B cell (primary cell): ENCODE measurements at regions of chr16 and their contacts with region 1.

Region 1: DNA sequence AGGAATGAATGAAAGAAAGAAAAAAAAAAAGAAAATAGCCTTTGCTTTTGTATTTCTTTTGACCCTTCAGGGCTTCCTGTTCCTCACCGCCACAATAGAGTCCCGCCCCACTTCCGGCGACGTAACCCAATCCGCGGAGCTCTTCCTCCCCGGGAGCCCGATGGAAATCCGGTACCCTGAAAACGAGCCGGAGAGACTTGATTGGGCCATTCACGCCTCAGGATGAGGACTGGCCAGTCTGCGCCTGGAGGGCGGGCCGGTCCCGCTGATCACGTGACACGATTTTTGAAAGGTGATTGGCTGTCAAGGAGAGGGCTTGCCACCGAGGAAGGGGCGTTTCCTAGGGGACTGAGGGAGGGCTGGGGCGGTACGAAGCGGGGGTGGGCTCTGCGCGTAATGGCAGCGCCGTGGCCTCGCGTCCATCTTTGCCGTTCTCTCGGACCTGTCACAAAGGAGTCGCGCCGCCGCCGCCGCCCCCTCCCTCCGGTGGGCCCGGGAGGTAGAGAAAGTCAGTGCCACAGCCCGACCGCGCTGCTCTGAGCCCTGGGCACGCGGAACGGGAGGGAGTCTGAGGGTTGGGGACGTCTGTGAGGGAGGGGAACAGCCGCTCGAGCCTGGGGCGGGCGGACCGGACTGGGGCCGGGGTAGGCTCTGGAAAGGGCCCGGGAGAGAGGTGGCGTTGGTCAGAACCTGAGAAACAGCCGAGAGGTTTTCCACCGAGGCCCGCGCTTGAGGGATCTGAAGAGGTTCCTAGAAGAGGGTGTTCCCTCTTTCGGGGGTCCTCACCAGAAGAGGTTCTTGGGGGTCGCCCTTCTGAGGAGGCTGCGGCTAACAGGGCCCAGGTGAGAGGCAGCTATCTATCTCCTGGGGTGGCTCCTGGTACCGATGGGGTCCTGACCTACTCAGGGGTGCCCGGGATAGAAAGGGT is at the starts of genes PSME3IP1 and RSPRY1:
- DNase-seq: peak; percentile 100
- ATAC-seq: peak; percentile 91
- H3K4me3 ChIP-seq: peak within 1 kb of the TSS; percentile 86 to 99 (median 89)
- H3K4me3 Mint-ChIP-seq: peak within 1 kb of the TSS; percentile 90
- H3K27ac ChIP-seq: peak within 1 kb of the TSS; percentile 87 to 92
- H3K27ac Mint-ChIP-seq: peak within 1 kb of the TSS; percentile 98
- H3K4me1 ChIP-seq: peaks cover 26 to 28% of the 10 kb centered on the region in 2 donors
- H3K4me1 Mint-ChIP-seq: peaks cover 61% of the 10 kb centered on the region
- H3K27me3 ChIP-seq: no peaks in the 10 kb centered on the region
- H3K27me3 Mint-ChIP-seq: no peaks in the 10 kb centered on the region
- CTCF ChIP-seq: no peak
- total RNA-seq, gene PSME3IP1: 156 and 166 TPM in 2 replicates
- total RNA-seq, gene RSPRY1: 37.7 and 38.4 TPM in 2 replicates

Region 2: GRCh38 chr16:56450986-56451752 is 735.0 kb before region 1 on chr16 and contains the starts of genes NUDT21 and OGFOD1:
- CTCF ChIA-PET with region 1: no interaction called
- POLR2A ChIA-PET with region 1: no interaction called
- intact Hi-C with region 1: loop called (anchors 5 kb)
- DNase-seq: peak; percentile 95
- ATAC-seq: peak; percentile 99
- H3K4me3 ChIP-seq: peak within 1 kb of the TSS; percentile 68 to 88 (median 85)
- H3K4me3 Mint-ChIP-seq: peak within 1 kb of the TSS; percentile 93
- H3K27ac ChIP-seq: peak within 1 kb of the TSS; percentile 53 to 71
- H3K27ac Mint-ChIP-seq: peak within 1 kb of the TSS; percentile 90
- H3K4me1 ChIP-seq: peaks cover 24 to 28% of the 10 kb centered on the region in 2 donors
- H3K4me1 Mint-ChIP-seq: peaks cover 38% of the 10 kb centered on the region
- H3K27me3 ChIP-seq: no peaks in the 10 kb centered on the region
- H3K27me3 Mint-ChIP-seq: no peaks in the 10 kb centered on the region
- CTCF ChIP-seq: no peak
- total RNA-seq, gene NUDT21: 85.5 and 89.4 TPM in 2 replicates
- total RNA-seq, gene OGFOD1: 28.7 and 30.9 TPM in 2 replicates

Region 3: DNA sequence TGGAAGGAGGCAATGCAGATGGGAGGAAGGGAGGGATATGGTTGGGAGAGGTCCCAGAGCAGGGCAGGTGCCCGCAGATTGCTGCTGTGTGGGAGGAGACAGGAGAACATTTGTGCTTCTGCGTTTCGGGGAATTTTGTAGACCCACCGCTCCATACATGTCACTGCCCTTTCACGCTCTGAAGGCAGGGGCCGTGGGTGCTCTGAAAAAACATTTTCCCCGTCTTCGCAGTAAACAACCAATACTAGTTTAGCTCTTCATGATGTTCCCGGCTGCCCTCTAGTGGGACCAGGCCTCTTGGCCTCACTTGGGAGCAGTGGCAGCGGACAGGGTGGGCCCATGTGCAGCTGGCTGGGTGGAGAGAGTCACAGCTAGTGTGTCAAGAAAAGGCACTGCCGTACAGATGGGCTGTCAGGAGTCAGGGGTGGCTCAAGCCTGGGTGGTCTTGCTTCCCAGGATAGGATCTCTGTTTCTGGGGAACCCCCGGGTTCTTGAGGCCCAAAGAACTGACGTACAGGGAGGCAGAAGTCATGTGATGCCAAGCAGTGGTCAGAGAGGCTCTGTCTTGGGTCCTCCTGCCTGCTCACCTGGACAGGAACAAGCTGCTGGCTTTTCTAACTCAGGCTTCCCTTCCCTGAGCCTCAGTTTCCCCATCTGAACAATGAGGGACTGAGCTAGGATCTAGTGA is 140.4 kb before region 1 on chr16:
- CTCF ChIA-PET with region 1: no interaction called
- POLR2A ChIA-PET with region 1: no interaction called
- intact Hi-C with region 1: no loop called
- DNase-seq: peak; percentile 84
- ATAC-seq: peak; percentile 48
- H3K4me3 ChIP-seq: peak overlapping the region in 2 of 5 experiments; percentile 25 to 38
- H3K4me3 Mint-ChIP-seq: peak overlapping the region; percentile 78
- H3K27ac ChIP-seq: peak overlapping the region; percentile 65 to 72
- H3K27ac Mint-ChIP-seq: peak overlapping the region; percentile 98
- H3K4me1 ChIP-seq: peaks cover 51 to 69% of the 10 kb centered on the region in 2 donors
- H3K4me1 Mint-ChIP-seq: peaks cover 68% of the 10 kb centered on the region
- H3K27me3 ChIP-seq: no peaks in the 10 kb centered on the region
- H3K27me3 Mint-ChIP-seq: no peaks in the 10 kb centered on the region
- CTCF ChIP-seq: peak; percentile 67

Region 4: DNA sequence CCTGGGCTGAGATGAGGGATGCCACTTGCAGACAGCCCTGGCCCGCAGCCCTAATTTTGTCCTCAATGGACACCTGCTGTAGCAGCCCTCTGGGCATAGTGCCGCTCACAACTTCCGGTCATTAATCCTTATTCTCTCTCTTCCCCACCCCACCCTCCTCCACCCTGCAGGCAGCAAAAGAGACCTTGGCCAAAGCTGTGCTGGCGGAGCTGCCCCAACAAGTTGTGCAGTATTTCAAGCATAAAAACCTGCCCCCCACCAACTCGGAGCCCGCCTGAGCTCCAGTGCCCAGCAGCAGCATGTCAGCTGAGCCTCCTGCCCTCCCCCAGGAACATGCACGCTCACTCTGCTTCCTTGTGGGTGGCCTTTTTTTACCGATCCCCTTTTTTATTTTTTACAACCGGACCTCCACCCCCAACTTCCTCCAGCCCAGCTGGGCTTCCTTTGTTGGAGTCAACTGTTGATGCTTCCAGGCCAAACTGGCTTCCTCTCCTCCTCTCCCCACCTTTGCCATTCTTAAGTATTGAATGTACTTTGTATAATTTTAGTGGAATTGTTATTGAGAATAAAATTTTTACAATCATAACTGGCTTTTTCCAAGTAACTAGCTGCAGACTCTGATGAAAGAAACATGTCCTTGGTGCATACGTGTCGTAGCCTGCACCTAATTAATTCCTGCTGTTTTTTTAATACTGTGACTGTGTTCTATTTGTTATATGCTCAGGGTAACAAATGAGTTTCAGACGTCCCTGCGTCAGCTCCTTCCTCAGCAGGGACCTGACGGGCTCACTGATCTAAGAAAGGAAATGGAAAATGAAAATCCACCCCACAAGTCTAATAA is 38.6 kb before region 1 on chr16:
- CTCF ChIA-PET with region 1: no interaction called
- POLR2A ChIA-PET with region 1: no interaction called
- intact Hi-C with region 1: loop called (anchors 5 kb)
- DNase-seq: no peak
- ATAC-seq: no peak
- H3K4me3 ChIP-seq: no peak overlapping the region
- H3K4me3 Mint-ChIP-seq: no peak overlapping the region
- H3K27ac ChIP-seq: no peak overlapping the region
- H3K27ac Mint-ChIP-seq: peak overlapping the region; percentile 56
- H3K4me1 ChIP-seq: peaks cover 15 to 26% of the 10 kb centered on the region in 2 donors
- H3K4me1 Mint-ChIP-seq: peaks cover 20% of the 10 kb centered on the region
- H3K27me3 ChIP-seq: no peaks in the 10 kb centered on the region
- H3K27me3 Mint-ChIP-seq: no peaks in the 10 kb centered on the region
- CTCF ChIP-seq: no peak

Region 5: DNA sequence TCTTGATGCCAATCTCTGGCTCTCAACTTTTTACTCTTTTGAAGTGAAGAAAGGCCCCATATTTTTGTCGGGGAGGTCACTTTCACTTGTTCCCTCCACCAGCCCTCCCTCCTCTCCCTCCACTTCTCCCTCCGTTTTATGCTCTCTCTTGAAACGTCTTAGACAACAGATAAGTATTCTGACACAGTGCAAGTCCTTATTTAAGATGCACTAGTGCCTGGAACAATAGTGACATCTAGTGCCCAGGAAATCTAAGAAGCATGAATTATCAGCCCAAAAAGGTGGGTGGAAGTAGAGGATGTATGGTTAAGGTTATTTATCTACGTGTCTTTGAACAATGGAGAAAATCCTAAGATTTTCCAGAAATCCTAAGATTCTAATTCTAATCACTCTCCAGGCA is 18.3 kb before region 1 on chr16:
- CTCF ChIA-PET with region 1: no interaction called
- POLR2A ChIA-PET with region 1: no interaction called
- intact Hi-C with region 1: no loop called
- DNase-seq: peak; percentile 73
- ATAC-seq: peak; percentile 60
- H3K4me3 ChIP-seq: no peak overlapping the region
- H3K4me3 Mint-ChIP-seq: no peak overlapping the region
- H3K27ac ChIP-seq: no peak overlapping the region
- H3K27ac Mint-ChIP-seq: no peak overlapping the region
- H3K4me1 ChIP-seq: no peaks in the 10 kb centered on the region
- H3K4me1 Mint-ChIP-seq: peaks cover 8% of the 10 kb centered on the region
- H3K27me3 ChIP-seq: no peaks in the 10 kb centered on the region
- H3K27me3 Mint-ChIP-seq: no peaks in the 10 kb centered on the region
- CTCF ChIP-seq: peak; percentile 73

Region 6: DNA sequence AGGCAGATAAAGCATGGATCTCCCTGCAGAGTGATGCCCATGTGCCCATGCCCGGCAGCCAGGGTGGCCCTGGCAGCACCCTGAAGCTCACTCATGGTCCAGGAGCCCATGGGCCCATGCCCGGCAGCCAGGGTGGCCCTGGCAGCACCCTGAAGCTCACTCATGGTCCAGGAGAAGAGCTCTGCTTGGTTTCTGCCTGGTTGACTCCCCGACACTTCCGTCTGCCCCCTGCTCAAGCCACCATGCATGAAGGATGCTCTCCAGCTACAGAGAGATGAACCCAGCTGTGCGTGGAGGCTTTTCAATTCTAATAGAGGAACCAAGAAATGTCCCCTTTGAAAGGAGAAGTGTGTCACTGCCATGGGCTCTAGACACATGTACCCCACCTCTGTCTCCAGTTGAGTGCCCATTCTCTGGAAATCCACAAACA is 227.1 kb after region 1 on chr16:
- CTCF ChIA-PET with region 1: interaction called, 5 read pairs
- POLR2A ChIA-PET with region 1: no interaction called
- intact Hi-C with region 1: loop called (anchors 1 kb)
- DNase-seq: peak; percentile 90
- ATAC-seq: peak; percentile 85
- H3K4me3 ChIP-seq: no peak overlapping the region
- H3K4me3 Mint-ChIP-seq: peak overlapping the region; percentile 30
- H3K27ac ChIP-seq: peak overlapping the region; percentile 74 to 80
- H3K27ac Mint-ChIP-seq: peak overlapping the region; percentile 71
- H3K4me1 ChIP-seq: peaks cover 47 to 58% of the 10 kb centered on the region in 2 donors
- H3K4me1 Mint-ChIP-seq: peaks cover 61% of the 10 kb centered on the region
- H3K27me3 ChIP-seq: no peaks in the 10 kb centered on the region
- H3K27me3 Mint-ChIP-seq: no peaks in the 10 kb centered on the region
- CTCF ChIP-seq: no peak

Region 7: DNA sequence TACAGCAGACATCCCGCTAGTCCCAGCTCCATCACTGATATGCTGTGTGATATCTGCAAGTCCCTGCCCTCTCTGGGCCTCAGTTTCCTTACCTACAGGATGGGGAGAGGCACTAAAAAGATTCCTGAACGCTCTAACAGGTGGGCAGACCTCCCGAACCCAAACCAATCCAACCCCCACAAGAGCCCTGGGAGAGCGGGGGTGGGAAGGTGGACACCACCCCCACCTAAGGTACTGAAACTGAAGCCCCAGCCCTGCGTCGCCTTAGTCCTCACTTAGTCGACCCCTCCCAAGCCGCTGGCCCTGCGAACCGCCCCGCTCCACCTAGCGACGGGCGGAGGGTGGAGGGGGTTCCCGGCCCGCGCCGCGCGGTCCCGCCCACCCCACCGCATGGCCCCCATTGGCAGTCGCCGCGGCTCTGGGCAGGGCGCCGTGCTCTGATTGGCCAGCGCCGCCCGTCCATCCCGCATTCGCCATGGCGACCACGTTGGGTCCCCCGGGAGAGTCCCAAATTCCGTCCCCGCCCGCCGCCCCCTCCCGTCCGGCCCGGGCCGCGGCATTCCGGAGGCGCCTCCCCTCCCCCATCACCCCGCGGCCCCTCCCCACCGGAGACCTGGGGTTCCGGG is 349.6 kb after region 1 on chr16:
- CTCF ChIA-PET with region 1: no interaction called
- POLR2A ChIA-PET with region 1: no interaction called
- intact Hi-C with region 1: loop called (anchors 5 kb)
- DNase-seq: peak; percentile 95
- ATAC-seq: peak; percentile 76
- H3K4me3 ChIP-seq: peak overlapping the region in 4 of 5 experiments; percentile 56 to 73 (median 70)
- H3K4me3 Mint-ChIP-seq: peak overlapping the region; percentile 89
- H3K27ac ChIP-seq: peak overlapping the region; percentile 90 to 94
- H3K27ac Mint-ChIP-seq: peak overlapping the region; percentile 96
- H3K4me1 ChIP-seq: peaks cover 86 to 91% of the 10 kb centered on the region in 2 donors
- H3K4me1 Mint-ChIP-seq: peaks cover 79% of the 10 kb centered on the region
- H3K27me3 ChIP-seq: no peaks in the 10 kb centered on the region
- H3K27me3 Mint-ChIP-seq: no peaks in the 10 kb centered on the region
- CTCF ChIP-seq: peak; percentile 29